ENCODE measurements at regions of chr13 and their contacts with region 1.

Region 1: GRCh38 chr13:45367358-45367757 is 26.4 kb upstream of the TPT1 start:
- DNase-seq: peak; percentile 98
- H3K4me3 Mint-ChIP-seq: peak overlapping the region; percentile 12
- H3K27ac Mint-ChIP-seq: peak overlapping the region; percentile 95
- H3K4me1 Mint-ChIP-seq: peaks cover 35% of the 10 kb centered on the region
- H3K27me3 Mint-ChIP-seq: no peaks in the 10 kb centered on the region
- CTCF ChIP-seq: no peak

Region 2: DNA sequence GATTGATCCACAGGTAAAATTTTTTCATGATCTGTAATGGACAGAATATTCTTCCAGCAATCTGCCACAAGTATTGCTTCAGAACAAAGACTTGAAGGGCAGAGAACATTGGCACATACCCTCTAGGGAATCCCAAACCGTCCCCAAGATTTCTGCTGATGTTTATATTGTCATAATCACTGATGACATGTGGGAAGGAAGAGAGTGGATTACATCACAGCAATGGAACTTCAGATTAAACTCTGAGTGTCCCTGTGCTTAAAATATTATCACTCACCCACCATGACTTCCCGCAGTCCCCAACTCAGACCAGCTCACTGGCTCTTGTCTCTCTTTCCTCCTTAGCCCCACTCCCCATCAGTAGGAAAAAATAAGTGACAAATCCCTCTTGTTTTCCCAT is 17.9 kb before region 1 on chr13:
- CTCF ChIA-PET with region 1: interaction called, 11 read pairs
- POLR2A ChIA-PET with region 1: interaction called, 5 read pairs
- intact Hi-C with region 1: no loop called
- DNase-seq: no peak
- H3K4me3 Mint-ChIP-seq: no peak overlapping the region
- H3K27ac Mint-ChIP-seq: peak overlapping the region; percentile 33
- H3K4me1 Mint-ChIP-seq: no peaks in the 10 kb centered on the region
- H3K27me3 Mint-ChIP-seq: no peaks in the 10 kb centered on the region
- CTCF ChIP-seq: no peak

Region 3: DNA sequence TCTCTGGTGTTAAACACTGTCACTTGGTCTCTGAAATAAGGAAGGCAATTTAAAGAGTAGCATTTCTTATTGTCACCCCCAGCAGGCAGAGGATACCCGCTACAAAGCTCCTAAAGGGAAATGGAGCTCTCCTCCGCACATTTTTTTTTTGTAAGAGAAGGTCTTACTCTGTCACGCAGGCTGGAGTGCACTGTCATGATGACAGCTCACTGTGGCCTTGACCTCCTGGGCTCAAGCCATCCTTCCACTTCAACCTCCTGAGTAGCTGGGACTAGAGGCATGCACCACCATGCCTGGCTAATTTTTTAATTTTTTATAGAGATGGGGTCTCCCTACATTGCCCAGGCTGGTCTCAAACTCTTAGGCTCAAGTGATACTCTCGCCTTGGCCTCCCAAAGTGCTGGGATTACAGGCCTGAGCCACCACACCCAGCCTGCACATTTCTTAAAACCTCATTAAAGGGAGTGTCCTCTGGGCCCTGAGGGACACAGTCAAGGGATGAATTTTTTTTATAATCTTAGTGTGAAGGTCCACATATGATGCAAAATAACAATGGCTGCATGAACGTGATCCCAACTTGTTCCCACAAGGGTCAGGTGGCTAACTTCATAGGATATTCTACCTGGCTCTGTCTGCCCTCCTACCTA is 18.7 kb after region 1 on chr13:
- CTCF ChIA-PET with region 1: interaction called, 74 read pairs
- POLR2A ChIA-PET with region 1: interaction called, 7 read pairs
- intact Hi-C with region 1: no loop called
- DNase-seq: no peak
- H3K4me3 Mint-ChIP-seq: no peak overlapping the region
- H3K27ac Mint-ChIP-seq: no peak overlapping the region
- H3K4me1 Mint-ChIP-seq: no peaks in the 10 kb centered on the region
- H3K27me3 Mint-ChIP-seq: no peaks in the 10 kb centered on the region
- CTCF ChIP-seq: no peak

Region 4: DNA sequence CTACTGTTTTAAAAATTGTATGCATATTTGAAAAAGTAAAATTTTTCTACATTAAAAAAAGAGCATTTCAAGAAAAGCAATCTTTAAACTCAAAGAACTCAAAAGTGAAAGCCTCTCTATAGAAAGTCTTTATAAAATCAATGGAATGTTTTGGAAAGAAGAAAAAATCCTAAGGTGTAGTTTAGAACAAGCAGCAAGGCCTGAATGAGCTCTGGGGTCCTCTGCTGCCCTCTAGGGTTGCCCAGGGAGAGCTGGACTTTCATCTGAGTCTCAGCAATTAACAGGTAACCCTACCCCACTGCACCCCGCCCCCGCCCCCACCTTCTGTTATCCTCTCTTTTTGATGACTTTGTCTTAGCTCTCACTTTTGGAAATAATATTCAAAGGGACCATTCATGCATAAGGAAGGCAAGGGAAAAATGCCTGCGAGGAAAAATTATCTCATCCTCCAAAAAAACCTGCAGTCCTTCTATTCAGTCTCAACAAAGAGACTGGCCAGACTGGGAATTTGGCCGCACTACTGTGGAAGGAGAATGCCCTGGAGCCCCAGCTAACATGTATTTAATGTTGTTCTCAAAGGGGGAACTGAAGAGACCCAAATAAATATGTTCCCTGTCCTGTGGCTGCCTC is 26.7 kb after region 1 on chr13:
- CTCF ChIA-PET with region 1: interaction called, 74 read pairs
- POLR2A ChIA-PET with region 1: interaction called, 7 read pairs
- intact Hi-C with region 1: no loop called
- DNase-seq: peak; percentile 74
- H3K4me3 Mint-ChIP-seq: no peak overlapping the region
- H3K27ac Mint-ChIP-seq: no peak overlapping the region
- H3K4me1 Mint-ChIP-seq: no peaks in the 10 kb centered on the region
- H3K27me3 Mint-ChIP-seq: no peaks in the 10 kb centered on the region
- CTCF ChIP-seq: peak; percentile 71

Region 5: DNA sequence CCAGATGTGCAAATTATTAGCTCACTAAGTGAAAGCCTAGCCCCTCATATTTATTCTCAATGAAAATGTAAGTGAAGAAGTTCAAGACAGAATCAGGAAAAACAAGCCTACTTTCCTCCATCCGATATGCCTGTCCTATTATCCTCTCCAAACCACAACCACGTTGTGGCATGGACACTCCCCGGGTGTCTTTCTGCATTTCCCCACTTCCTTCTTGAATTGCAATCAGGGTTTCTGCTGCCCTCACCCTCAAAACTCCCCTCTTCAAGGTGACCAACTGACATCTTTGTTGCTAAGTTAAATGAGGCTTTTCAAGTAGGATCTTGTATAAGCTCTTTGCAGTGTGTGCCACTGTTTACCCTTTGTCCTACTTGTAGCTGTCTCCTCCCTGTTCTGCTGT is 39.1 kb after region 1 on chr13:
- CTCF ChIA-PET with region 1: interaction called, 22 read pairs
- POLR2A ChIA-PET with region 1: no interaction called
- intact Hi-C with region 1: no loop called
- DNase-seq: no peak
- H3K4me3 Mint-ChIP-seq: no peak overlapping the region
- H3K27ac Mint-ChIP-seq: peak overlapping the region; percentile 47
- H3K4me1 Mint-ChIP-seq: peaks cover 5% of the 10 kb centered on the region
- H3K27me3 Mint-ChIP-seq: no peaks in the 10 kb centered on the region
- CTCF ChIP-seq: no peak

Region 6: GRCh38 chr13:45417790-45418534 is 50.6 kb after region 1 on chr13 and contains the start of gene SLC25A30:
- CTCF ChIA-PET with region 1: interaction called, 10 read pairs
- POLR2A ChIA-PET with region 1: interaction called, 6 read pairs
- intact Hi-C with region 1: no loop called
- DNase-seq: peak; percentile 83
- H3K4me3 Mint-ChIP-seq: peak within 1 kb of the TSS; percentile 81
- H3K27ac Mint-ChIP-seq: peak within 1 kb of the TSS; percentile 87
- H3K4me1 Mint-ChIP-seq: peaks cover 6% of the 10 kb centered on the region
- H3K27me3 Mint-ChIP-seq: no peaks in the 10 kb centered on the region
- CTCF ChIP-seq: no peak
- total RNA-seq, gene SLC25A30: 10.5 and 11.9 TPM in 2 replicates

Region 7: GRCh38 chr13:45464687-45465453 is 97.5 kb after region 1 on chr13 and contains the start of gene COG3:
- CTCF ChIA-PET with region 1: interaction called, 4 read pairs
- POLR2A ChIA-PET with region 1: interaction called, 9 read pairs
- intact Hi-C with region 1: loop called (anchors 2 kb)
- DNase-seq: peak; percentile 97
- H3K4me3 Mint-ChIP-seq: peak within 1 kb of the TSS; percentile 90
- H3K27ac Mint-ChIP-seq: peak within 1 kb of the TSS; percentile 90
- H3K4me1 Mint-ChIP-seq: peaks cover 30% of the 10 kb centered on the region
- H3K27me3 Mint-ChIP-seq: no peaks in the 10 kb centered on the region
- CTCF ChIP-seq: peak; percentile 13
- total RNA-seq, gene COG3: 42.8 and 44.1 TPM in 2 replicates